ENCODE measurements at regions of chr11 and their contacts with region 1.

Region 1: GRCh38 chr11:128725630-128726319 is 31.9 kb downstream of the FLI1 start:
- DNase-seq: no peak

Region 2: GRCh38 chr11:128603752-128604414 is 121.9 kb before region 1 on chr11:
- intact Hi-C with region 1: no loop called
- DNase-seq: no peak

Region 3: GRCh38 chr11:128745311-128746136 is 19.7 kb after region 1 on chr11:
- intact Hi-C with region 1: no loop called
- DNase-seq: peak; percentile 82

Region 4: GRCh38 chr11:128759597-128759996 is 33.8 kb after region 1 on chr11:
- intact Hi-C with region 1: no loop called
- DNase-seq: no peak

Region 5: DNA sequence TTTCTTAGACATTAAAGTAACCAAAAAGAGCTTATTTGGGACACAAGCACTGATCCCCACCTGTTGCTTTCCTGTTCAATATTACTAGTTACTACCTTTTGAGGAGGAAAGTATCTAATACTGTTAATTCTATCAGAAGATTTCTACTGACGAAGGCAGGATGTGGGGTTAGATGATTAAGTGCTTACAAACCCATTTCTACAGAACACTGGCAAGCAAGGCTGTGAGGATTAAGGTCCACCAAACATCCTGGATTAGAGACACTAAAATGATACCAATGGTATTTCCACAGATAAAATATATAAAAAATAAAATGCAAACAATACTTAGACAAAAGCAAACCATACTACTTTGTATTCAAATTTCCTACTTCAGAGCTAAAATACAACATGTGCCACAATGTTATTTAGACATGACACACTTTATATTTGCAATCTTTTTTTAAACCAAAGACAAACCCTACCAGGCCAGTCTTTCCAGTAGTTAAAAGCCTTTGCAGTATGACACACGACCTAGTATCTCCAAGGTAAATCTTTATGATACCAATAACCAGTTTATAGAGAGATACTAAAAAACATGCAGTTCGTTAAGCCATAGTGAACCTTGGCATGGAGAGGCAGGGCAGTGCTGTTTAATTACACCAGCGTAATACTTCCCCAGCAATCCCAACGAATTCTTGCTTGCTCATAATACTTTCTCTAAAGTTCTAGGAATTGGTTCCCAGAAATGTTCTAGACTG is 288.1 kb after region 1 on chr11:
- intact Hi-C with region 1: no loop called
- DNase-seq: no peak

Region 6: DNA sequence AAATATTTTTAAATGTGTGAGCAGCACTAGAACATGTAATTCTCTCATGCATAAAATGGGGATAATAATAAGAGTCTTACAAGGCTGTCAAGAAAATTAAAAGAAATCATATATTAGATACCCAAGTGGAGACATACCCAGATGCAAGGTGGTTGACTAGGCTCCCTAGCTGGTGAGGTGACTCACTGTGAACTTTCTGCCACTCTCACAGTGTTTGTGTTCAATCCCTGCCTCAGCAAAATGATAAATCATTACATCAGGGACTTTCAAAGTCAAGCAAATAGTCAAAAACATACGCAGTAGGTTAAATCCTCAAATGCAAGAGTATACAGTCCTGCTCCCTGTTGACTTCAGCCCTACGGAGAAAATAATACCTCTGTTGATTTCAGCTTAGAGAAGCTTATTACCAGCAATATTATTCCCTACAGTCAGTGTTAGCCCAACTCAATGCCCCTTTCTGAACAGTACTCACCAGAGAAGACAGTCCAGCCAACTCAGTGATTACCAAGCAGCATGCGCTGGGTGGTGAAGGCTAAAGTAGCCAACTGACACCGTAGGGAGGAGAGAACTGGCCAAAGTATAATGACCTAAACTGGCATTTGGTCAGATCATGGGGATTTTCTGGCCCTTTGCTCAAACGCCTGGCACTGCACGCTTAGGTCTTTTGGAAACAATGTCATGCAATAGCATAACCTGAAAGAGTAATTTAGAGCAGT is 576.8 kb after region 1 on chr11:
- intact Hi-C with region 1: loop called in 1 of 2 experiments (anchors 10 kb)
- DNase-seq: no peak

Measured in posterior vena cava (tissue), 2 donors.